ENCODE measurements at regions of chr2 and their contacts with region 1.

Region 1: GRCh38 chr2:68837164-68837860 is 33.9 kb downstream of the BMP10 start:
- DNase-seq: peak; percentile 84
- ATAC-seq: peak; percentile 94
- H3K4me3 Mint-ChIP-seq: no peak overlapping the region
- H3K27ac Mint-ChIP-seq: no peak overlapping the region
- H3K4me1 Mint-ChIP-seq: peaks cover 5% of the 10 kb centered on the region; the same call in 1 of the 2 replicates
- H3K27me3 Mint-ChIP-seq: no peaks in the 10 kb centered on the region
- CTCF ChIP-seq: no peak

Region 2: DNA sequence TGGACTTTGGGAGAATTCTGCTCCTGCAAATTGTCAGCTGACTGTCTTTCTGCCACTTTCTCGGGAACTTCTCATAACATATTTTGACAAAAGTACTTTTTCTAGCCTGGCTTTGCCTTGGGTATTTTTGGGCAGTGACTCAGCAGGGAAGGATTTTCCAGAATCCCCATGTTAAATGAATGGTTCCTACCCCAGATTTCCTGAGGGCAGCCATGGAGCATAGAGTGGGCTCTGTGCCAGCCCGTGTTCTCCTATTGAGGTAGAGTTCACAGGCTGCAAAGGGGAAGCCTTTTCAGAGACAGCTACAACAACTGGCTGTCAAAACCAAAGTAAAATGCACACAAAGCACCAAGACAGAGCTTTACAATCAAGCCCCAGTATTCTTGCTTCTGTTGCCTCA is 25.9 kb before region 1 on chr2:
- CTCF ChIA-PET with region 1: interaction called, 10 read pairs
- POLR2A ChIA-PET with region 1: interaction called, 6 read pairs
- DNase-seq: no peak
- ATAC-seq: no peak
- H3K4me3 Mint-ChIP-seq: no peak overlapping the region
- H3K27ac Mint-ChIP-seq: no peak overlapping the region
- H3K4me1 Mint-ChIP-seq: peaks cover 13% of the 10 kb centered on the region
- H3K27me3 Mint-ChIP-seq: no peaks in the 10 kb centered on the region
- CTCF ChIP-seq: no peak

Region 3: DNA sequence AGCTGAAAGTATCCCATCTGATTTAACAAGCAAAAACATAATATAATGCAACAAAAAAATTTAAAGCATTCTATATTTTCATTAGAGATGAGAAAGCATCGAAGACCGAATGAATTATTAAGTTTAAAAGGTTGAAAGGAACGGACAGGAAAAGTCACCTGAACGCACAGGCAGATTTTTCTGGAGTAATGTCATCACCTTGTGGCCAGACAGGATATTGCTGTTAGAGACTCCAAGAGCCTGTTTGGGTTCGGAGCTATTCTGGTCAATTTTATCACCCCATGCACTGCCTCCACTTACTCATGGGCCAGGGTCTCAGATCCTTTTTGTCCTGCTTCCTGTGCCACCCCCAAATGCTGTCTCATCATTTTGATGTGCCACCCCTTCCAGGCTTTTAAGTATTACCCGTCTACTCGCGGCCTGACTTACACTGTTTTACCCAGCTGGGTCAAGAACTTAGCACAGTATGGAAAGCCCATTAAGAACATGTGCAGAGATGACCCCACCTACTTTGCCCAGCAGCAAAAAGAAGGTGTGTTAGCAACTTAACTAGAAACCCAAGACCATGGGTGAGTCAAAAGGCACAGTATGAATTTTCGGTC is 88.1 kb after region 1 on chr2:
- CTCF ChIA-PET with region 1: interaction called, 18 read pairs
- POLR2A ChIA-PET with region 1: no interaction called
- DNase-seq: peak; percentile 38
- ATAC-seq: peak; percentile 90
- H3K4me3 Mint-ChIP-seq: no peak overlapping the region
- H3K27ac Mint-ChIP-seq: no peak overlapping the region
- H3K4me1 Mint-ChIP-seq: peaks cover 5% of the 10 kb centered on the region
- H3K27me3 Mint-ChIP-seq: no peaks in the 10 kb centered on the region
- CTCF ChIP-seq: peak; percentile 63